ENCODE measurements at regions of chr13 and their contacts with region 1.

Region 1: DNA sequence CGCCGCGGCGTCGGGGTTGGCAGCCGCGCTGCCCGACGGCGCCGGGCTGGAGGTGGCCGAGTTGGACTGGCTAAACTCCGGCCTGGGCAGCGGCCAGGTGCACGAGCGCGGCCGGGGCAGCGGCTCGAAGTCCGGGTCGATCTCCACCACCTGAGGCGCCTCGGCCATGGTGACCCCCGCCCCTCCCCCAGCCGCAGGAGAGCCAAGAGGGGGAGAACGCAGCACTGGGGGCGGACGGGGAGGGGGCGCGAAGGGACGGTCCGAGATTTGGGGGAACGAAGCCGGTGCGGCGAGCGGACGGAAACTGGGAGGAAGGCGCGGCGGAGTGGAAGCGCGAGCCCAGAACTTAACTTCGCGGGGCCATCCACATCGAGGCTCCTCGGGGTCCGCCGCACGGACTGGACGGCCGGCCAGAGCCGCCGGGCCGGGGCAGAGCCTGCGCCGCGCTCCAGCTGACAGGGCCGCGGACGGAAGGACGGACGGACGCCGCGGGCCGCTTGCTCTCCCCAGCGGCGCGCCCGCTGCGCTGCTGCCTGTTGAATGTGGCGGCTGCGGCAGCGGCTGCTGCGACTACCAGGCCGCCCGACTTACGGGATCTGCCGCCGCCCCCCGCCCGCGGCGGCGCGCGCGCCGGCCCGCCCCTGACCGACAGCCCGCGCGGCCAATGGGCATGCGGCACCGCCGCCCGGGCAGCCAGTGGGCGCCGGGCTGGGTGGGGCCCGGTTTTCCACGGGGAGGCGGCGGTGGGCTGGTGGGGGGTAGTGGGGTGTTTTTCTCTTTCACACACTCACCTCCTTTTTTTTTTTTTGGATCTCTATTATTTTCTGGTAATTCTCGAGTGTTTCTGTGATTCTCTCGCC is at the start of gene FOXO1:
- DNase-seq: peak; percentile 92
- H3K4me3 ChIP-seq: peak within 1 kb of the TSS; percentile 74
- H3K27ac ChIP-seq: peak within 1 kb of the TSS; percentile 78
- H3K4me1 ChIP-seq: peaks cover 21% of the 10 kb centered on the region
- H3K27me3 ChIP-seq: no peaks in the 10 kb centered on the region
- CTCF ChIP-seq: no peak
- total RNA-seq, gene FOXO1: 2.9 and 3.0 TPM in 2 replicates

Region 2: DNA sequence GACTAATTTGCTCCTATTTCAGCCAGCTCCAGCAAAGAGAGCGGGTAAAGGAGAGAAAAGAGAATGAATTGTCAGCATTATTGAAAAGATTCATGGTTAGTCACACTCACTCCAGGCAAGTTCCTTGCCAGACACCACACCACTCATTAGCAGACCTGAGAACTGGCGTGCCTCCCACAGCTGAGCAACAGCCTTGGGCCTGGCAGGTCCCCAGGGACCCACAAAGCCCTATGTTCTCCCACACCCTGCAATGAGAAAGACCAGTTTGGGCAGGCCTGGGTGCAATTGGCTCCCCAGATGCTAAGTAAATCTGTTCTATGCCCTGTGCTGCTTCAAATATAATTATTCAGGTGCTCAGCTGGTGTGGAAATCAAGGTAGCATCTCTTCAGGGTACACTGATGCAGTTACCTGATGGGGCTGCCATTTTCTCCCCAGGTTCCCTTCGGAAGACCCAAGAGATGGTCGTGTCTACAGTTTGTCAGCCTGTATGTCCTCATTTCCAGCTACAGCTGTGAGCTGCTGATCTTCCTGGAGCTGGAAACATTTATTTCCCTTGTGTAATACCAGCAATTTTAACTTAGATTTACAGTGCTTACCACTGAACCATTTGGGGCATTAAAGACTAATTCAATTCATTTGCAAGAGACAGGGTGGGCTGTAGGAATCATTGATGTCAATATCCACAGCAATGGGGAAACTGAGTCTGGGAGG is 605.8 kb before region 1 on chr13:
- CTCF ChIA-PET with region 1: no interaction called
- POLR2A ChIA-PET with region 1: no interaction called
- intact Hi-C with region 1: loop called (anchors 5 kb)
- DNase-seq: peak; percentile 87
- H3K4me3 ChIP-seq: no peak overlapping the region
- H3K27ac ChIP-seq: no peak overlapping the region
- H3K4me1 ChIP-seq: peaks cover 50% of the 10 kb centered on the region
- H3K27me3 ChIP-seq: no peaks in the 10 kb centered on the region
- CTCF ChIP-seq: no peak

Region 3: GRCh38 chr13:40777166-40777808 is 111.0 kb after region 1 on chr13:
- CTCF ChIA-PET with region 1: no interaction called
- POLR2A ChIA-PET with region 1: no interaction called
- intact Hi-C with region 1: loop called (anchors 1 kb)
- DNase-seq: peak; percentile 75
- H3K4me3 ChIP-seq: peak overlapping the region; percentile 24
- H3K27ac ChIP-seq: no peak overlapping the region
- H3K4me1 ChIP-seq: peaks cover 6% of the 10 kb centered on the region
- H3K27me3 ChIP-seq: no peaks in the 10 kb centered on the region
- CTCF ChIP-seq: peak; percentile 75

Measured in A673 (cell line).